Calu3 (cell line): ENCODE measurements at regions of chr1 and their contacts with region 1.

Region 1: GRCh38 chr1:184075055-184076029 is 23.8 kb downstream of the TSEN15 start:
- DNase-seq: peak; percentile 50
- H3K4me3 Mint-ChIP-seq: no peak overlapping the region
- H3K27ac Mint-ChIP-seq: no peak overlapping the region
- H3K4me1 Mint-ChIP-seq: no peaks in the 10 kb centered on the region
- H3K27me3 Mint-ChIP-seq: no peaks in the 10 kb centered on the region
- CTCF ChIP-seq: peak; percentile 51

Region 2: DNA sequence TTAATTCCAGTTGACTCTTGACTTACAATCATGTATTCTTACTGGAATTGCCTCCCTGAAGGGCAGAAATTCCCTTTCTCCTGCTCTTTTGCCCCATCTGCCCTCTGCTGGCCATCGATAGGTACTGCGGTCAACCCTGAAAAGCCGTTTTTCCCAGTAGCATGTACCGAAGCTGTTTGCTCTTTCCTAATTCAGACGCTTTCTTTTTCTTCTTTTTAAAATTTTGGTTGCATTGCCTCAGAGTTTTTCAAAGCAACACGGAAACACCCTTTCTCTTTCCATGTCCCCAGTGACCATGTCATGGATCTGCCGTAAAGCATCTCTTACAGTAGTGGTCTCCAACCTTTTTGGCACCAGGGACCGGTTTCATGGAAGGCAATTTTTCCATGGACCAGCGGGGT is 147.3 kb after region 1 on chr1:
- CTCF ChIA-PET with region 1: interaction called, 8 read pairs
- intact Hi-C with region 1: loop called (anchors 1 kb)
- DNase-seq: peak; percentile 78
- H3K4me3 Mint-ChIP-seq: peak overlapping the region; percentile 39
- H3K27ac Mint-ChIP-seq: no peak overlapping the region
- H3K4me1 Mint-ChIP-seq: no peaks in the 10 kb centered on the region
- H3K27me3 Mint-ChIP-seq: peaks cover 27% of the 10 kb centered on the region
- CTCF ChIP-seq: peak; percentile 97

Region 3: DNA sequence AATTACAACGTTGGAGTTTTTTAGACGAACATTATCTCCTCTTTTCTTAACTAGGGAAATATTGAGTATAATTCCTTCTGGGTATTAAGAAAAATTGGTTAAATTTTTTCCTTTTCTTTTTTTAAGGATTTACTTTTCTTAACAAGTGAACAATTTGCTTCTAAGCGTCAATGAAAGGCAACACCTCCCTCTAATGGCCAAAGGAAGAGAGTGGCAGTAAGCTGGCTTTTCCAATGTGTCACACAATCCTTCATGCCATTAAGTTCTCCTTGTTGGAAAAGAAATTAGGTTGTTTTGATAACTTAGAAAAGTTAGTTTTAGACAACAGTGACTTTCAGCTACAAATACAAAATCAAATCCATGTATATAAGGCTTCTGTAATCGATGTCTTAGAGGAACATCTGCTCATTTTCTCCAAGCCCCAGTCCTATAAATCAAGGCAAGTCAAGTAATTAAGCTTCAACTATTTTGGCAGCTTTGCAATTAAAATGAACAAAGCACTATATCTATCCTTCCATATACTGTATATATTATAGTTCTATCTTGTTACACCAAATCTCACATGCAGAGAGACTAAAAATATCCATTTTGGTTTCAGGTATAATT is 616.5 kb after region 1 on chr1:
- CTCF ChIA-PET with region 1: no interaction called
- intact Hi-C with region 1: loop called (anchors 1 kb)
- DNase-seq: peak; percentile 28
- H3K4me3 Mint-ChIP-seq: no peak overlapping the region
- H3K27ac Mint-ChIP-seq: no peak overlapping the region
- H3K4me1 Mint-ChIP-seq: no peaks in the 10 kb centered on the region
- H3K27me3 Mint-ChIP-seq: no peaks in the 10 kb centered on the region
- CTCF ChIP-seq: peak; percentile 44